Activated CD4-positive, alpha-beta memory T cell treated with anti-CD3 and anti-CD28 coated beads, Interleukin-2, amount 10 ng/mL, durations not matched to agents 7 days and 5 days (primary cell): ENCODE measurements at regions of chr10 and their contacts with region 1.

Region 1: GRCh38 chr10:99435986-99436638 is 5.7 kb upstream of the GOT1 start:
- DNase-seq: no peak
- H3K4me3 Mint-ChIP-seq: no peak overlapping the region
- H3K27ac Mint-ChIP-seq: no peak overlapping the region
- H3K4me1 Mint-ChIP-seq: peaks cover 17% of the 10 kb centered on the region
- H3K27me3 Mint-ChIP-seq: no peaks in the 10 kb centered on the region

Region 2: DNA sequence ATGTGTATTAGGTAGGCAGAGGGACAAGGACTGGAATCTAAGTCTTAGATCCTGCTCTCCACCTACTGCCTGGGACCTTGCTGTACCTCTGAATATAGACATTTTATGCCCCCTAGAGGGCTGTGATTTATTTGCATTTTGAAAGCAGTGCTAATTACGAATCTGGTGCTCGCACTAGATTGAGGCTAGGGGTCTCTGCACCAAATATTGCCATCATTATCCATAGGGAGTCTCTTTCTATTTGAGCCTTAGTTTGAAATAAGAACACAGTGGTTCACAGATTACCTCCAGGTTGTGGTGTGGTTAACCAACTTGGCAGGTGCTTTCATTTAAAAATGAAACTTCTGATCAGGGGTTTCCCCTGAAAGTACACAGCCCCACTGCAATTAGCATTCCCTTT is 65.1 kb before region 1 on chr10:
- CTCF ChIA-PET with region 1: no interaction called
- POLR2A ChIA-PET with region 1: no interaction called
- DNase-seq: no peak
- H3K4me3 Mint-ChIP-seq: no peak overlapping the region
- H3K27ac Mint-ChIP-seq: no peak overlapping the region
- H3K4me1 Mint-ChIP-seq: peaks cover 3% of the 10 kb centered on the region
- H3K27me3 Mint-ChIP-seq: peaks cover 67% of the 10 kb centered on the region

Region 3: GRCh38 chr10:99382181-99382580 is 53.9 kb before region 1 on chr10:
- CTCF ChIA-PET with region 1: no interaction called
- POLR2A ChIA-PET with region 1: no interaction called
- DNase-seq: no peak
- H3K4me3 Mint-ChIP-seq: no peak overlapping the region
- H3K27ac Mint-ChIP-seq: no peak overlapping the region
- H3K4me1 Mint-ChIP-seq: no peaks in the 10 kb centered on the region
- H3K27me3 Mint-ChIP-seq: peaks cover 12% of the 10 kb centered on the region

Region 4: DNA sequence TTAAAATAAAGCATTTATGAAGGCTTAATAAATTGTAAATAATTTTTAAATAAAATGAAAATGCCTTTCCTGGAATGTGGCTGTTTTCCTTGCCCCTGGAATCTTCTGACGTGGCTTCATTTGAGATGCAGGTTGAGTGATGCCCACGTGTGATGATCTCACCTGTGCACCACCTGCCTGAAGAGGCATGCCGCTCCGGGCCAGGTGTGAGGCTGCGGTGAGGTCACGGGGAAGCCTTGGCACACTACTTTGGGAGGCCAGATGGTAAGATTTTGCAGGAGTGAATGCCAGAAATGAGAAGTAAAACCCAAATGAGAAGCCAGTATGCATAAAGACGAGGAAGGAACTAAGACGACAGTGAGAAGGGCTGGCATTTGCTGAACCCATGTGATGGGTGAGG is 41.9 kb before region 1 on chr10:
- CTCF ChIA-PET with region 1: interaction called, 11 read pairs
- POLR2A ChIA-PET with region 1: no interaction called
- DNase-seq: no peak
- H3K4me3 Mint-ChIP-seq: no peak overlapping the region
- H3K27ac Mint-ChIP-seq: no peak overlapping the region
- H3K4me1 Mint-ChIP-seq: peaks cover 15% of the 10 kb centered on the region
- H3K27me3 Mint-ChIP-seq: peaks cover 4% of the 10 kb centered on the region

Region 5: DNA sequence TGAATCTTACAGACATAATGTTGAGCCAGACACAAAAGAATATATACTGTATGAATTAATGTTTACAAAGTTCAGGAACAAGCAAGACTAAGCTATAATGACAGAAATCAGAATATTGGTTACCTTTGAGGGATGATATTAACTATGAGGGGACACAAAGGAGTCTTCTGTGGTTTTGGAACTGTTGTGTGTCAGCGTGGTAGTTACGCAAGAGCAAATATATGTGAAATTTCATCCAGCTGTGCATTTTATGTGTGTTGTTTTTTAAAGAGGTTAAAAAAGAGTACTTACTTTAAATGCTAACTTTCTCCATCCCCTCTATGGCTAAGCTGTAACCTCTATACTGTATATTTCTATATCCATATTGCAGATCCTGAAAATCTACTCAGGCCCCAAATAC is 169.2 kb after region 1 on chr10:
- CTCF ChIA-PET with region 1: interaction called, 26 read pairs
- POLR2A ChIA-PET with region 1: interaction called, 3 read pairs
- DNase-seq: no peak
- H3K4me3 Mint-ChIP-seq: no peak overlapping the region
- H3K27ac Mint-ChIP-seq: no peak overlapping the region
- H3K4me1 Mint-ChIP-seq: no peaks in the 10 kb centered on the region
- H3K27me3 Mint-ChIP-seq: peaks cover 6% of the 10 kb centered on the region